Common myeloid progenitor, CD34-positive (primary cell): ENCODE measurements at regions of chr1 and their contacts with region 1.

Region 1: DNA sequence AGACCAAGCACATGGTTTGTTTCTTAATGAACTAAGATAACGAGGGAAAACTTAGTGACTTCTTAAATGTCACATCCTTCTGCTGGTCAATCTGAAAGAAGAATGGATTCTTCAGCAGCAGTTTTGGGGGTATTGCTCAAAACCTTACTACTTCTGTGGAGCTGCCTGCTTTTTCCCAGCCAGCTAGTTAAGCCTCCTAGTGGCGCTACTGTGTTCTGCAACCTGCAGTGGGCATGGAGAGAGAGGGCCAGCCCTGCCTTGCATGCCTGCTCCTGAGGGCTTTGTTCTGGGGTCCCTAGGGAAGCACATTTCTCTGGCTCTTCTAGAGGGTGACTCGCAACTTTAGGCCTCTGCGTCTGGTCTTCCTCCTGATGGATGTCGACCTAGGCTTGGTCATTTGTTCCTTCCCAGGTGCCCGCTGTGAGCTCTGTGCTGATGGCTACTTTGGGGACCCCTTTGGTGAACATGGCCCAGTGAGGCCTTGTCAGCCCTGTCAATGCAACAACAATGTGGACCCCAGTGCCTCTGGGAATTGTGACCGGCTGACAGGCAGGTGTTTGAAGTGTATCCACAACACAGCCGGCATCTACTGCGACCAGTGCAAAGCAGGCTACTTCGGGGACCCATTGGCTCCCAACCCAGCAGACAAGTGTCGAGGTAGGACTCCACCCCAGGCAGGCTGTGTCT is 42.0 kb downstream of the LAMC2 start:
- DNase-seq: peak; percentile 22 to 47 (median 39)
- H3K4me3 ChIP-seq: no peak overlapping the region
- H3K27ac ChIP-seq: no peak overlapping the region
- H3K4me1 ChIP-seq: no peaks in the 10 kb centered on the region
- H3K27me3 ChIP-seq: peaks cover 0 to 1% (median 0%) of the 10 kb centered on the region in 5 experiments

Region 2: DNA sequence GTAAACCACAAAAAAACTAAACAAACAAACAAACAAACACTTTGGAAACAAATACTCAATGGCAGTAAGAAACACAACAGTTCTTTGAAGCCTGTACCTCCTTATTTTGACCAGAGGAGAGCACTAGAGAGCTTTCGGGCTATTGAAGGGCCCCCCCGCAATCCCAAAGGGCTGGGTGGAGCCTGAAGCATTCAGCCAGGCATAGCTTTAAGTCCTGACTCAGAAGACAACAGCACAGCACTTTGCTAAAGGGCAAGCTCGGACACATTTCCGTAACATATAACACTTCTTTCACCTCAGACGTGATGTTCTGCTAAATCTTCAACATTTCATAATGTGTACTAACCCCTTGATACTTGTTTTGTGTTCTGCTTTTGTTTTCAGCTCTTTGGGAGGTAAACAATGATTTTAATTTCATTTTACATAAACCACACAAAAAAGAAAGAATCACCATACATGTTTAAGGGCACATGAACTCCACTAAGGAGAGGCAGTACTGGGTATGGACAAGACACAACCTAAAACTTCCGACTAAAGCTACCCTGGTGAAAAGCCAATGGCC is 265.5 kb before region 1 on chr1:
- CTCF ChIA-PET with region 1: interaction called, 13 read pairs
- POLR2A ChIA-PET with region 1: no interaction called
- DNase-seq: peak; percentile 62 to 81 (median 78)
- H3K4me3 ChIP-seq: peak overlapping the region in 2 of 7 experiments; percentile 34 to 52
- H3K27ac ChIP-seq: no peak overlapping the region
- H3K4me1 ChIP-seq: no peaks in the 10 kb centered on the region
- H3K27me3 ChIP-seq: peaks cover 0 to 1% (median 0%) of the 10 kb centered on the region in 5 experiments

Region 3: DNA sequence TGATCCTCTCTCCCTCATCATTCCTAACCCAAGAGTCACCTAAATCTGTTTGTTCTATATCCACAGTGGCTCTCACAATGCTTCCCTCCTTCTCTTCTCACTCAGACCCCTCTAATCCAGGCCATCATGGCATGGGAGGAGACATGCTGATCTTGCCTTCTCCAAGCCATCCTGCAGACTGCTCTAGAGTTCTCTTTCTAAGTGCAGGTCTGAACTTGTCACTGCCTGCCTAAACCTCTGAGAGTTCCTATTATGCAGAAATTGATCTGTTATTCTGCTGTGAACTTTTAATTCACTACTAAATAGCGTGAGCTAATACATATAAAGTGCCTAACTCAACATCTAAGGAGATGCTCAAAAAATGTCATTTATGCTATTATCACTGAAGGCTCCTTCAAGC is 15.2 kb before region 1 on chr1:
- CTCF ChIA-PET with region 1: no interaction called
- POLR2A ChIA-PET with region 1: no interaction called
- DNase-seq: no peak
- H3K4me3 ChIP-seq: no peak overlapping the region
- H3K27ac ChIP-seq: no peak overlapping the region
- H3K4me1 ChIP-seq: peaks cover 0 to under 1% (median 0%) of the 10 kb centered on the region in 4 experiments
- H3K27me3 ChIP-seq: peaks cover 0 to 5% (median 3%) of the 10 kb centered on the region in 5 experiments